ENCODE measurements at regions of chr6 and their contacts with region 1.

Region 1: DNA sequence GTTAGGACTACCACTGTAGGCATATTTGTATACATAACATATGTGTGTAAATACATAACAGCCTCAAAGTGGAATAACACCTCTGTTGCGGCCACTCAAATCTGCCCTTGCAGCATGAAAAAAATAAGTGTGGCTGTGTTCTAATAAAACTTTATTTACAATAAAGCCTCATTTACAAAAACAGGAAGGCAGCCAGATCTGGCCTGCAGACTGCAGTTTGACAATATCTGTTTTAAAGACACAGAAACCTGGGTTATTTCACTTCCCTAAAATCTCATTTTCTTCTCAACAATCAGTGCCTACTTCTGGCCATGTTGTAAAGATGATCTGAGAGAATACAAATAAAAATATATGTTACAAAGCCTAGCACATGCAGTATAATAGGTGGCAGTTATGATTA is 53.9 kb upstream of the SCML4 start:
- DNase-seq: no peak
- H3K4me3 ChIP-seq: no peak overlapping the region
- H3K27ac ChIP-seq: no peak overlapping the region
- H3K4me1 ChIP-seq: no peaks in the 10 kb centered on the region
- H3K27me3 ChIP-seq: no peaks in the 10 kb centered on the region
- CTCF ChIP-seq: no peak
- POLR2A ChIP-seq: no peak

Region 2: DNA sequence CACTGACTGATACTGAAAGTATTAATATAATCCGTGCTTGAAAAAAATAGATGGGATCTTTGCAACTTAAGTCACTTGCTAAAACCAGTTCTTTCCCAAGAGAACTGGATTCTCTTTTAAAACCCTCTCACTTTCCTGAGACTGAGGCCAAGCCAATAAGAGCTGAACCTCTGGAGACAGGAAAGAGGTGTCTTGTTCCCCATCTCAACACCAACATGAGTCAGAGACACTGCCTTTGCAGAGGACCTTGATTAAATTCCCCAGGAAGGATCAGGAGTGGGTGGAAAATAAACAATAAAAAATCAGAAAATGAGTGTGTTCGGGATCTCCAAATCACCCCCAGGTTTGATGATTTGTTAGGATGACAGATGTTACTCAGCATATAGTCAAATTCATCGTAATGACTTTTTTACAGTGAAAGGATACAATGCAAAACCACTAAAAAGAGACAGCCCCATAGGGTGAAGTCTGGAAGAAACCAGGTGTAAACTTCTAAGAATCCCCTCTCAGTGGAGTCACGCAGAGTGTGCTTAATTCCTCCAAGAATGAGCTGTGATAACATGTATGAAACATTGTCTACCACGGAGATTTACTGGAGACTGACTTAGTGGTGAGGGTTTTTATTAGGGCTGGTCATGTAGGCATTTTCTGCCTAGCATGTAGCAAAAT is 639.8 kb before region 1 on chr6:
- CTCF ChIA-PET with region 1: no interaction called
- POLR2A ChIA-PET with region 1: no interaction called
- dilution Hi-C with region 1: no loop called
- intact Hi-C with region 1: no loop called
- DNase-seq: peak; percentile 16
- H3K4me3 ChIP-seq: no peak overlapping the region
- H3K27ac ChIP-seq: no peak overlapping the region
- H3K4me1 ChIP-seq: peaks cover 6% of the 10 kb centered on the region
- H3K27me3 ChIP-seq: no peaks in the 10 kb centered on the region
- CTCF ChIP-seq: no peak
- POLR2A ChIP-seq: no peak

Region 3: DNA sequence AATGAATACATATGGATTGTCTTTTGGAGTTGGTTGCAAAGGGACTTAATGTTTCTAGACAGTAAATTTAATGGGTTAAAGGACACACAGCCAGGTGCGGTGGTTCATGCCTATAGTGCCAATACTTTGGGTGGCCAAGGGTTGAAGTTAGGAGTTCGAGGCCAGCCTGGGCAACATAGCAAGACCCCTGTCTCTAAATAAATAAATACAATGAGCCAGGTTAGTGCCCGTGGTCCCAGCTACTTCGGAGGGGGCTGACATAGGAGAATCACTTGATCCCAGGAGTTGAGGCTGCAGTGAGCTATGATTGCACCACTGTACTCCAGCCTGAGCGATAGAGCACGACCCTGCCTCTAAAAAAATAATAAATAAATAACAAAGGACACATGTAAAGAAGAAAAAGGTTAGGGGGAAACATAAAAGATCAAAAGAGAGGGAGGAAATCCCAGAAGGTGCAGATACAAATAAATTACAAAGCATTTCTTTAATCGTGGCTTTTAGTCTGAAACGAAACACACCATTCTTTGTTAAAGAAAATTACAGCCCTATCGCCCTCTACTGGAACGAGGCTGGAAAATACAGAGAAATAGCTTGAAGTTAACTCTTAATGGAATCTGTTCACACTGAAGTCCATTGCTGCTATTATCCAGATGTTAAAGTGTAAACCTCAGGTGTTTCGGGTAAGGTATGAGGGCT is 11.2 kb before region 1 on chr6:
- CTCF ChIA-PET with region 1: interaction called, 16 read pairs
- POLR2A ChIA-PET with region 1: no interaction called
- dilution Hi-C with region 1: no loop called
- intact Hi-C with region 1: no loop called
- DNase-seq: peak; percentile 45
- H3K4me3 ChIP-seq: no peak overlapping the region
- H3K27ac ChIP-seq: no peak overlapping the region
- H3K4me1 ChIP-seq: no peaks in the 10 kb centered on the region
- H3K27me3 ChIP-seq: peaks cover 0 to 3% of the 10 kb centered on the region in 2 experiments
- CTCF ChIP-seq: peak; percentile 30 to 41
- POLR2A ChIP-seq: no peak

Measured in endothelial cell of umbilical vein (primary cell).